Calu3 (cell line): ENCODE measurements at regions of chr4 and their contacts with region 1.

Region 1: DNA sequence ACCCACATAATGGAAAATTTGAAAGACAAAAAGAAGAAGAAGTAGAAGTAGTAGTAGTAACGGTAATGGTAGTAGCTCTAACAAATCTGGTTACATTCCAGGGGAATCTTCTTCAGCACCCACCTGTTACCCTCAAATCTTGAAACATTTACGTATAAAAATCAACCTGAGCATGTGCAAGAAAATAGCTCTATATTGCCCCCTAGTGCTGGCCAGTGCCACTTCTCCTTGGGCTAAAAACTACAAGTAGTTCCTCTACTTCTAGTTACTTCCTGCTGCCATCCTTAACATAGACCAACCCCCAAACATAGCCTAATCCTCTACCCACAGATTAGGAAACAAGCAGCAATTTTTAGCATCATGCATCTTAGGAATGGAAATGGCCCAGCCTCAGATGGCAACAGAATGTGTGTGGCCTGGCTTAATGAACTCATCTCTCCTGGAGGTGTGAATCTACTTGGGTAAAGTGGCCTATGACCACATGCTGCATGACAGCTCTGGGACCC is 3.1 kb downstream of the PDGFC start:
- DNase-seq: peak; percentile 76
- H3K4me3 Mint-ChIP-seq: peak overlapping the region; percentile 84
- H3K27ac Mint-ChIP-seq: peak overlapping the region; percentile 78
- H3K4me1 Mint-ChIP-seq: peaks cover 27% of the 10 kb centered on the region
- H3K27me3 Mint-ChIP-seq: no peaks in the 10 kb centered on the region
- CTCF ChIP-seq: peak; percentile 31

Region 2: DNA sequence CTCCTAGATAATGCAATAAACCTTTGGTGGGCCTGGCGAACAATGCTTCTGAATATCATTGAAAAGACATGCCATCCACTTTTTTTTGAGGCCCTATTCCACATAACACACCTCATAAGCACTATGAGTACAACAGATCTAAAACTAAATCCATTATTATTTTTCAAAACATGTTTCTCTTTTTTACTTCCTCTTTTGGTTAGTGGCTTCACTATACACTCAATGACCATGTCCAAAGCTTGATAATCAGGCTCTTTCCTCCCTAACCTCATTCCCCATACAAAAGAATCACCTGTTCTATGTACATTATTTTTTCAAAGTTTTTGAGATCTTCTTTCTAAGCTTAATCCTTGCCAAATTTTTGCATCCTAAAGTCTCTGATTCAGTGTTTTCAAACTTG is 1780.5 kb before region 1 on chr4:
- CTCF ChIA-PET with region 1: no interaction called
- intact Hi-C with region 1: no loop called
- DNase-seq: no peak
- H3K4me3 Mint-ChIP-seq: no peak overlapping the region
- H3K27ac Mint-ChIP-seq: no peak overlapping the region
- H3K4me1 Mint-ChIP-seq: no peaks in the 10 kb centered on the region
- H3K27me3 Mint-ChIP-seq: no peaks in the 10 kb centered on the region
- CTCF ChIP-seq: no peak

Region 3: DNA sequence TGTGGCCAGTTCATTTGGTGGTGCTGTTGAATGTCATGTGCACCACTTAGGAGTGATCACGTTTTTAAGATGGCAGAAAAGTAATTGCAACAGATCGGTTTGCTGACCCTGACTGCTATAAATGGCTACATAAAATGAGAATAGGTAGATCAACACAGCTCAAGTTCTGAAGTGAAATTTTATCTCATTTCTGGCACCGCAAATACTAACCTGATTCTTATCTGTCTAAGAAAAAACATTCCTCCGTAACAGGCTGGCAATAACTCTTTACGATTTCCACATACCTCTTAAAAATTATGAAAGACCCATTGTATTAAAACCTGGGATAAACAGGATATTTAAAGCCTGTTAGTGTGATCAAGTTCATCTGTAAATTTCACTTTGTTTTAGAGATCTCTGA is 384.4 kb before region 1 on chr4:
- CTCF ChIA-PET with region 1: no interaction called
- intact Hi-C with region 1: loop called (anchors 5 kb)
- DNase-seq: no peak
- H3K4me3 Mint-ChIP-seq: no peak overlapping the region
- H3K27ac Mint-ChIP-seq: peak overlapping the region; percentile 74
- H3K4me1 Mint-ChIP-seq: peaks cover 11% of the 10 kb centered on the region
- H3K27me3 Mint-ChIP-seq: no peaks in the 10 kb centered on the region
- CTCF ChIP-seq: no peak

Region 4: GRCh38 chr4:156691983-156692382 is 276.5 kb before region 1 on chr4:
- CTCF ChIA-PET with region 1: no interaction called
- intact Hi-C with region 1: loop called (anchors 5 kb)
- DNase-seq: no peak
- H3K4me3 Mint-ChIP-seq: no peak overlapping the region
- H3K27ac Mint-ChIP-seq: no peak overlapping the region
- H3K4me1 Mint-ChIP-seq: no peaks in the 10 kb centered on the region
- H3K27me3 Mint-ChIP-seq: no peaks in the 10 kb centered on the region
- CTCF ChIP-seq: no peak

Region 5: DNA sequence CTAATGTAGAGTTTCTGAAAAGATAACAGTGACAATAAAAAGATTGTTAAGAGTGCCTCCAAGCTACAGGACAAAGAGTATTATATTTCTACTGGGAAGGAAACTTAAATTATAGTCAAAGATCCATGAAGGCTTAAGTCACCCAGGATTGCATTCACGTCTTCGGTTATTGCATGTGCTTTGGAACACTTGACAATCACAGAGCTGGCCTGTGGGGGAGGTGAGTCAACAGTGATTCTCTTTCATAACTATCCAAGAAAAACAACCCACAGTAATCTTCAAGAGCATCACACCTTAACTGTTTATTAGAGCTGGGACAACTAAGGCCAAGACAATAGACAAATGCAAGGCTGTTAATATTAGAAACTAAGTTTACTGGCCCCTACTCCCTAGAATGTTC is 37.3 kb before region 1 on chr4:
- CTCF ChIA-PET with region 1: no interaction called
- intact Hi-C with region 1: loop called (anchors 1 kb)
- DNase-seq: peak; percentile 61
- H3K4me3 Mint-ChIP-seq: peak overlapping the region; percentile 45
- H3K27ac Mint-ChIP-seq: peak overlapping the region; percentile 98
- H3K4me1 Mint-ChIP-seq: peaks cover 11% of the 10 kb centered on the region
- H3K27me3 Mint-ChIP-seq: no peaks in the 10 kb centered on the region
- CTCF ChIP-seq: no peak

Region 6: GRCh38 chr4:157045507-157046127 is 77.1 kb after region 1 on chr4:
- CTCF ChIA-PET with region 1: interaction called, 11 read pairs
- intact Hi-C with region 1: loop called (anchors 1 kb)
- DNase-seq: peak; percentile 43
- H3K4me3 Mint-ChIP-seq: no peak overlapping the region
- H3K27ac Mint-ChIP-seq: no peak overlapping the region
- H3K4me1 Mint-ChIP-seq: peaks cover 23% of the 10 kb centered on the region
- H3K27me3 Mint-ChIP-seq: no peaks in the 10 kb centered on the region
- CTCF ChIP-seq: peak; percentile 25